GM12878 (cell line): ENCODE measurements at regions of chr3 and their contacts with region 1.

Region 1: DNA sequence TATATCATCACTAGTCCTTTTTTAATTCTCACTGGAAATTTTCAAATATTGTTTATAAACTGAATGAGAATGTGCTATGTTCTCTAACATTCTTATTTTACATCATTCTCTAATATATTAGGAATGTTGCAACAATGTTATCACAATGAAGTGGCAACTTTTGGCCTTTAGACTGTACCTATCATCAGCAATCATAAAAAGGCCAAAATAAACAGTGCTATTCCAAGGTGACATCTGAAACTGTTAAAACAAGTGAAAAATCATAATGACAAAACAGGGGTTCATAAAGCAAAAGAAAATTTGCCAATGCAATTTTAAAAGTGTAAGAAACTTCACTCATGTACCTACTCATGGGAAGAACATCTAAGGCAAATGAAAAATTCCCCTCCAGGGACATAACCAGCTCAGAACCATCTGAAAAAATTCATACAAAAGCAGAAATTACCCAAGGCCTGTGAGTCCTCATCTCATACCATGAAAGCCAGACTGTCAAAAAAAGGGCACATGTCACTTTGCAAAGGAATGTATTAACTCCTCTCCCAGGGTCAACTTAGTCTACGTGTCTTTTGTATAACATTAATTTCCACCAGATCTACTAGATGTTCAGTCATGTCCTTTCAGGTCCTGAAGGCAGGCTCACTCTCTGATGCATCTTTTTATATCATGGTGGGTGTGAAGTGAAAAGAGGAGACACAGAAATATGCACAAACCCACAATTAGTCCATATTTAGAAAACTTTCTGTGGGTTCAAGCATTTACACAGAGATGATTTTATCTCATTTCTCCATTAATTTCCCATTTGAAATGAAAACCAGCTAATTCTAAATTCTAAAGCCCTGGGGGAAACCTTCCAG is 211.9 kb downstream of the CBLB start:
- DNase-seq: no peak
- ATAC-seq: no peak; the same call in 2 of the 3 replicates
- H3K4me3 ChIP-seq: no peak overlapping the region
- H3K27ac ChIP-seq: no peak overlapping the region
- H3K4me1 ChIP-seq: no peaks in the 10 kb centered on the region
- H3K27me3 ChIP-seq: no peaks in the 10 kb centered on the region
- CTCF ChIP-seq: no peak
- EP300 ChIP-seq: no peak
- POLR2A ChIP-seq: no peak
- RAD21 ChIP-seq: no peak

Region 2: DNA sequence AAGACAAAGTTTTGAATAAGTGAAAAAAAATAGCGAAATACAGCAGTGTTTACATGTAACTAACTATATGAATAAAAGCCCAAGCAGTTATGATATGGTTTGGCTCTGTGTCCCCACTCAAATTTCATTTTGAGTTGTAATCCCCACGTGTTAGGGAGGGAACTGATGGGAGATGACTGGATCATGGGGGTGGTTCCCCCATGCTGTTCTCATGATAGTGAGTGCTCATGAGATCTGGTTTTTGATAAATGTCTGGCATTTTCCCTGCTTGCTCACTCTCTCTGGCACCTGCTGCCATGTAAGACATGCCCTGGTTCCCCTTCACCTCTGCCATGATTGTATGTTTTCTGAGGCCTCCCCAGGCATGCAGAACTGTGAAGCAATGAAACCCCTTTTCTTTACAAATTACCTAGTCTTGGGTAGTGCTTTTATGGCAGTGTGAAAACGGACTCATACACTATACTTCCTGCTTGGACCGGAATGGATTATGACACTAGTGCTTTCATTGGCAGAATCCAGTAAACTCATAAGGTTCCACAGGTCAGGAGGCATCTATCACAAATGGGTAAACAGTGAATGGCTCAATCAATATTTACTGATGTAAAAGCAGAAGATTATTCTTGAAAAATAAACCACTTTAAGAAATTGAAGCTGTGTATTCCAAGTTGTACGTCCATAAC is 19.9 kb after region 1 on chr3:
- CTCF ChIA-PET with region 1: interaction called, 3 read pairs
- POLR2A ChIA-PET with region 1: no interaction called
- RAD21 ChIA-PET with region 1: no interaction called
- SMC1A ChIA-PET with region 1: interaction called, 11 read pairs
- in situ Hi-C with region 1: no loop called
- intact Hi-C with region 1: no loop called
- DNase-seq: no peak
- ATAC-seq: no peak
- H3K4me3 ChIP-seq: no peak overlapping the region
- H3K27ac ChIP-seq: no peak overlapping the region
- H3K4me1 ChIP-seq: no peaks in the 10 kb centered on the region
- H3K27me3 ChIP-seq: no peaks in the 10 kb centered on the region
- CTCF ChIP-seq: no peak
- EP300 ChIP-seq: no peak
- POLR2A ChIP-seq: no peak
- RAD21 ChIP-seq: no peak